ENCODE measurements at regions of chr20 and their contacts with region 1.

Region 1: DNA sequence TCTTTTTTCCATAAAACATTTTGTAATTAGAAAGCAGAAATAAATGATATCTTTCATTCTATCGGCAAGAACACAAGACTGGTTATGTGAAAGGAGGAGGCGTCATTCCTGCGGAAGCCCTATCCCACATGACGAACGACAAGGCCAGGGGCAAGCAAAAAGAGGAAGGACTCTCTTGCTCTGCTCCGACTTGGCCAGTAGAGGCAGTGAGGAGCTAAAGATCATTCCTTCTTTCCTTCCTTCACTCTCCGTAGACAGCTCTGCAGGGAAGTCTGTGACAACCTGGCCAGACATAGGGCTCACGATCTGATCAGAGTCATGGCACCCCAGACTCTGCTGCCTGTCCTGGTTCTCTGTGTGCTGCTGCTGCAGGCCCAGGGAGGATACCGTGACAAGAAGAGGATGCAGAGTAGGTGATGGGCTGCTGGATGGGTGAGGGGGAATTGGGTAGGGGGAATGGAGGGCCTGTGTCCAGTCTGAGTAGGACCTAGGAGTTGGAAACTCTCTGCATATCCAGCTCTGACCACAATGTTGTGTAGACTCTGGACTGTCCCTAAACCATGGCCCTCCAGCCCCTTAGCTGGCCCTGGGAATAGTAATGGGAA is at the start of gene WFDC10A:
- DNase-seq: peak; percentile 79
- ATAC-seq: peak; percentile 100
- H3K4me3 ChIP-seq: no peak within 1 kb of the TSS
- H3K27ac ChIP-seq: no peak within 1 kb of the TSS
- H3K4me1 ChIP-seq: no peaks in the 10 kb centered on the region
- H3K27me3 ChIP-seq: peaks cover 5% of the 10 kb centered on the region; the same call in 1 of the 2 replicates
- CTCF ChIP-seq: peak; percentile 80
- total RNA-seq, gene WFDC10A: not detected in 2 replicates

Region 2: DNA sequence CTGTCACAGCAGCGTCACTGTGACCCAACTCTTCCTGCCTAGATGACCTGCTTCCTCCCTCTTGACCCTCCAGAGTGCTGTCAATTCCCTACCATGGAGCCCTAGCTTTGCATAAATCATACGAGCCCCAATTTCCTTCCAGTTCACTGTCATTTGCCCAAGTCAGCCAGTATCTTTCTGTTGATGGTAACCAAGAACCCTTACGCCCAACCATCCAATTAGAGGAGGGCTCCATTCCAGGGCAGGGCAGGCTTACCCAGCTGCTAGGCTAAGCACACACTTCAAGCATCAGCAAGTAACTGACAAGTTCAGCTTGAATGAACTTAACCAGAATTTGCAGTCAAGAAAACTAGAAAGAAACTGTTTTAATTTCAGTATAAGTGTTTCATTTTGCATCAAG is 136.4 kb after region 1 on chr20:
- CTCF ChIA-PET with region 1: interaction called, 11 read pairs
- POLR2A ChIA-PET with region 1: no interaction called
- intact Hi-C with region 1: loop called (anchors 10 kb)
- DNase-seq: no peak
- ATAC-seq: no peak
- H3K4me3 ChIP-seq: no peak overlapping the region
- H3K27ac ChIP-seq: no peak overlapping the region
- H3K4me1 ChIP-seq: no peaks in the 10 kb centered on the region
- H3K27me3 ChIP-seq: no peaks in the 10 kb centered on the region
- CTCF ChIP-seq: no peak